ENCODE measurements at regions of chr4 and their contacts with region 1.

Region 1: DNA sequence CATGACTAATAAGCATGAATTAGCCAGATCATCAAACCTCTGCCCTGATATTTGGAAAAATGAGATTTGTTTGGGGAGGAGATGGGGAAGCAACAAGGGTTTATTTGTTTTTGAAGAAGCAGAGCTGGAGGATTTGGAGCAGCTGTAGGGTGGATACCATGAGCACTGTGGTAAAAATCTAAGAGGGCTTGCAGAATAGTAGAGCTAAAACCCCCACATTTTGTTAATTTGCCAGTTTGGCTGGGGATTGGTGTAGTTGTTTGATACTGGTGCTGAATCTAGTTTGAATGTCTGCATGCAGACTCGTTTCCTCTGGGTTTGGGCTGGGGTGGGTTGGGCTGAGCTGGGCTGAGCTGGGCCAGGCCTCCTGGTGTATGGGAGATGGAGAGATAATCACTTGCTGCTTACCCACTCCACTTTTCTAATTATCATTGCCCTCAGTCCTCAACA is 43.7 kb downstream of the SMAD1 start:
- DNase-seq: peak; percentile 33
- H3K4me3 ChIP-seq: peak overlapping the region; percentile 56
- H3K27ac ChIP-seq: peak overlapping the region; percentile 95
- H3K4me1 ChIP-seq: peaks cover 89% of the 10 kb centered on the region
- CTCF ChIP-seq: no peak

Region 2: DNA sequence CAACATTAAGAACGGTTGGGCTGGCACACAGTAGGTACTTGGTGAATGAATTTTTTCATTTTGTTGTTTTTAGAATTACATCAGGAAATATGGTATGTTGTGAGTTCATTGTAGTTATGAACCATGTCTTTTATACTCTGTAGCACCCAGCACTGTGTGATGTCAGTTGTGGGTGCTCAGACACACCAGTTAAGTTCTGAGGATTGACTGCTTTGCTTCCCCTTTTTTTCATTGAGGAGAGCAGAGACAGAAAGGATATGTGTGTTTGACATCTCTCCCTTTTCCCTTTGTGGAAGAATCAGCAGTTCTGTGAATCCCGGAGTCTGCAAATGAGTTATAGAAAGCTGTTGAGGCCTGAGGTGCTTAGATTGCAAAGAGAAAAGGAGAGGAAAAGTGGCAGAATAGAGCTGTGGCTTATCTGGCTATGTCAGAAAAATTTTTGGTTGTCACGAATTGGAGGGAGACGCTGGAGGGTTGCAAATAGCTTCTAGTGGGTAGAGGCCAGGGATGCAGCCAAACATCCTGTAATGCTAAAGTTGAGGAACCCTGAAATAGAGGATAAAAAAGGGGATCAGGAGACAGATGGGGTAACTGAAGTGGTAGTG is 30.5 kb before region 1 on chr4:
- CTCF ChIA-PET with region 1: no interaction called
- POLR2A ChIA-PET with region 1: interaction called, 67 read pairs
- intact Hi-C with region 1: no loop called
- DNase-seq: peak; percentile 55
- H3K4me3 ChIP-seq: peak overlapping the region; percentile 27
- H3K27ac ChIP-seq: peak overlapping the region; percentile 60
- H3K4me1 ChIP-seq: peaks cover 100% of the 10 kb centered on the region
- CTCF ChIP-seq: no peak

Region 3: GRCh38 chr4:145501051-145501660 is 24.2 kb before region 1 on chr4:
- CTCF ChIA-PET with region 1: no interaction called
- POLR2A ChIA-PET with region 1: interaction called, 67 read pairs
- intact Hi-C with region 1: loop called (anchors 1 kb)
- DNase-seq: peak; percentile 96
- H3K4me3 ChIP-seq: peak overlapping the region; percentile 51
- H3K27ac ChIP-seq: peak overlapping the region; percentile 99
- H3K4me1 ChIP-seq: peaks cover 100% of the 10 kb centered on the region
- CTCF ChIP-seq: 0 out of 2 replicates have a peak, but pooled peaks have one; percentile 3

Region 4: GRCh38 chr4:145511913-145512522 is 13.3 kb before region 1 on chr4:
- CTCF ChIA-PET with region 1: interaction called, 3 read pairs
- POLR2A ChIA-PET with region 1: interaction called, 14 read pairs
- intact Hi-C with region 1: no loop called
- DNase-seq: peak; percentile 67
- H3K4me3 ChIP-seq: no peak overlapping the region
- H3K27ac ChIP-seq: no peak overlapping the region
- H3K4me1 ChIP-seq: peaks cover 29% of the 10 kb centered on the region
- CTCF ChIP-seq: no peak

Region 5: GRCh38 chr4:145545538-145546174 is 20.3 kb after region 1 on chr4:
- CTCF ChIA-PET with region 1: no interaction called
- POLR2A ChIA-PET with region 1: interaction called, 19 read pairs
- intact Hi-C with region 1: no loop called
- DNase-seq: no peak
- H3K4me3 ChIP-seq: no peak overlapping the region
- H3K27ac ChIP-seq: no peak overlapping the region
- H3K4me1 ChIP-seq: peaks cover 39% of the 10 kb centered on the region
- CTCF ChIP-seq: no peak

Region 6: DNA sequence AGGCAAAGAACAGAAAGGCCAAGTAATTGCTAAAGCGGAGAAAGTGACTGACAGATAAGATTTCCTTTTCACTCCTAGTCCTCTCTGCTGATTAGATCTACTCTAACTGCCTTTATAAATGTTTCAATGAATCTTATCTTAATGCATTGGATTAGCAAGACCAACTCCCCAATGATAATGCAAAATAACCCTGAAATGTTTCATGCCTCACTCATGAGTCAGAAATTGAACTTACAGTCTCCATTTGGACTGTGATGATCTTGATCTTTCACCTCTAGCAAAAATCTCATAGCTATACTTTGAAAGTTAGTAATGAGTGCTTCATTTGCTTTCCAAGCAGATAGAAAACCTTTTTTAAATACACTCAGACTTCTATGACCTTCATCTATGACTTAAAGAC is 970.0 kb after region 1 on chr4:
- CTCF ChIA-PET with region 1: no interaction called
- POLR2A ChIA-PET with region 1: no interaction called
- intact Hi-C with region 1: no loop called
- DNase-seq: no peak
- H3K4me3 ChIP-seq: no peak overlapping the region
- H3K27ac ChIP-seq: no peak overlapping the region
- H3K4me1 ChIP-seq: no peaks in the 10 kb centered on the region
- CTCF ChIP-seq: no peak

Measured in OCI-LY7 (cell line).